GM12878 (cell line): ENCODE measurements at regions of chr6 and their contacts with region 1.

Region 1: DNA sequence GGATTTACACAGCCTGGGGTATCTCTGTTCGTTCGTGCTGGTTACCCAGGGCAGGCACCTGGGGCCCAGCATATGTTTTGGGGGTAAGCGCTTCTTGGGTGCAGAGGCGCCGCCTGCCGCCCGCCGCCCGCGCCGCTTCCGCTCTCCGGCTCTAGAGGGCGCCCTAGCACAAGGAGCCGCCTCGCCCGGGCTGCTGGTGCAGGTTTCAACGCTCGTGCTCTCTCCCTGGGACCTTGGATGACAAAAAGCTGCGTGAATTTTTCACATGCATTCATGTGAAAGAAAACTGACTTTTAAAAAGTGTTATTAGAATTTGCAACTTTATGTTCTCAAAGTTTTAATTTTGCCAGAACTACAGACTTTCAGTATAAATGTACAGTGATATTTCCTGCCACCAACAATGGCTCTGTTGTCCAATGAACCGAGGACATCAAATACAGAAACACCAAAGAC is 32.5 kb downstream of the PRR18 start:
- DNase-seq: no peak
- ATAC-seq: peak; percentile 93
- H3K4me3 ChIP-seq: no peak overlapping the region
- H3K27ac ChIP-seq: no peak overlapping the region
- H3K4me1 ChIP-seq: peaks cover 28% of the 10 kb centered on the region
- H3K27me3 ChIP-seq: no peaks in the 10 kb centered on the region; a peak in 1 of 4 replicates
- CTCF ChIP-seq: peak; percentile 99 to 100 (median 100); a peak in 5 of 6 replicates
- EP300 ChIP-seq: no peak
- POLR2A ChIP-seq: no peak
- RAD21 ChIP-seq: peak; percentile 99

Region 2: DNA sequence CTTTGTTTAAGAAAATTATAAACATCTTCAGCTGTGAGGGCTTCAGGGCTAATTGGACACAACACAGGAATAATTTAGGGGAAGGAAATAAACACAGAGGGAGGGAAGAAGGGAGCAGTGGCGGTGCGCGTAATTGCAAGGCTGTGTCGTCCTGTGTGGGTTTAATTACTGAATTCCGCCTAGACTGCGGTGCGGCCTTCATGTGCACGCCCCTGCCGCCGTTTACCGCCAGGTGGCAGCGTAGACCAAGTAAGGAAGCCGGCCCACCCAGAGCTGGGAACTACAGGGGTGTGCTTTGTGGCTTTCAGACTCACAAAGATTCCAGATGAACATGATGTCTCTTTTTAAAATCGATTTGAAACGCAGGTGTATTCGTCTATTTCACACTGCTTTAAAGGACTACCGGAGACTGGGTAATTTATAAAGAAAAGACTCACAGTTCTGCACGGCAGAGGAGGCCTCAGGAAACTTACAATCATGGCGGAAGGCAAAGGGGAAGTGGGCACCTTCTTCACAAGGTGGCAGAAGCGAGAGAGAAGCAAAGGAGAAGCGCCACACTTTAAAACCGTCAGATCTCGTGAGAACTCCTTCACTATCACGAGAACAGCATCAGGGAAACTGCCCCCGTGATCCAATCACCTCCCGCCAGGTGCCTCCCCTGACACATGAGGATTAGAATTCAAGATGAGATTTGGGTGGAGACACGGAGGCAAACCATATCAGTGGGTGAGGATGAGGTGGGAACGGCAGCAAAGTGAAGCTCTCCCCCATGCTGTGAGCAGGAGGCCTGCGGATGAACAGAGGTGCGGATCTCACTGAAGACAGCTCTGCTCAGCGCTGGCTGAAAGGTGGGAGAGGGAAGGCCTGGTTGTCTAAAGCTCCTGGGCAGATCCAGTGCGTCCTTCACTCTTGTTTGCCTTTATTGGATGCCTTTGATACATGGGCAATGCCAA is 390.7 kb before region 1 on chr6:
- CTCF ChIA-PET with region 1: no interaction called
- POLR2A ChIA-PET with region 1: no interaction called
- RAD21 ChIA-PET with region 1: no interaction called
- SMC1A ChIA-PET with region 1: no interaction called
- in situ Hi-C with region 1: no loop called
- intact Hi-C with region 1: loop called (anchors 10 kb)
- DNase-seq: peak; percentile 5
- ATAC-seq: peak; percentile 100
- H3K4me3 ChIP-seq: no peak overlapping the region
- H3K27ac ChIP-seq: no peak overlapping the region
- H3K4me1 ChIP-seq: no peaks in the 10 kb centered on the region
- H3K27me3 ChIP-seq: no peaks in the 10 kb centered on the region
- CTCF ChIP-seq: peak; percentile 88
- EP300 ChIP-seq: no peak
- POLR2A ChIP-seq: no peak
- RAD21 ChIP-seq: peak; percentile 83

Region 3: DNA sequence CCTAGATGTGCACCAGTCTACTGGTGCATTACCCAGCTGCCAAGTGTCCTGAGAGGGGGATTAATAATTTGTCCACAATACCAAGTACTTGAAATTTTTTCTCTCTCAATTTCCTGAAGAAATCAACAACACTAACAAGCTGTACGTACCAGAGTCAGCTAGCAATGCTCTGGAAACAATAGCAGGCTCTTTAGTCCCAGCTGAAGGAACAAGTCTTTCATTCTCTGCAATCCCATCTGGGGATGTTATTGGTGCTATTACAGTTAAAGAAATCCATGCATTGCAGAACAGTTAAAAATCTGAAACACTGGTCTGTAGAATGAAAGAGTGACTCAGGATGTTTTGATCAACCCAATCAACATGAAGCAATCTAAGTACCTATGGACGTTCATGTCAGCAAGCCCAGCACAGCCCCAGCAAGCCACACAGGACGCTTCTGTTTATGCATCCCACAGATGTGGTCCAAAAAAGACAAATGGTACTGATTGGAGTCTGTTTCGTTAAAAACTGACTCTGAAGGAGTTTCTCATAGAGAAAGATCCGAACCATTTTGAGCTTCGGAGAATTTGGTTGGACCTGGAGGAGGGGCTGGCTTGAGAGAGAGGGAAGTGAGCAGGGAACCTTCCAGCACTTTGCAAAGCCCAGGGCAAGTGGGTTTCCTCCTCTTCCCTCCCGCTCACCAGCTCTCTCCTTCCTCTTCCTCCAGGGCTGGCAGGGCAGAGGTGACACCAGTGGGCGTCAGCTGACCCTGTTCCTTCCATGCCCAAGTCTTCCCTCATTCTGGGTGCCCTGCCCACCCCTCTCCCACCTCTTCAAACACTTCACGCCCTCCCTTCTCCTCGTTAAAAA is 20.5 kb after region 1 on chr6:
- CTCF ChIA-PET with region 1: interaction called, 3 read pairs
- POLR2A ChIA-PET with region 1: no interaction called
- RAD21 ChIA-PET with region 1: no interaction called
- SMC1A ChIA-PET with region 1: interaction called, 10 read pairs
- in situ Hi-C with region 1: no loop called
- intact Hi-C with region 1: no loop called
- DNase-seq: no peak
- ATAC-seq: no peak
- H3K4me3 ChIP-seq: no peak overlapping the region
- H3K27ac ChIP-seq: no peak overlapping the region
- H3K4me1 ChIP-seq: no peaks in the 10 kb centered on the region
- H3K27me3 ChIP-seq: no peaks in the 10 kb centered on the region
- CTCF ChIP-seq: no peak
- EP300 ChIP-seq: no peak
- POLR2A ChIP-seq: no peak
- RAD21 ChIP-seq: no peak

Region 4: GRCh38 chr6:166325383-166326042 is 49.8 kb after region 1 on chr6:
- CTCF ChIA-PET with region 1: interaction called, 11 read pairs
- POLR2A ChIA-PET with region 1: interaction called, 3 read pairs
- RAD21 ChIA-PET with region 1: interaction called, 7 read pairs
- SMC1A ChIA-PET with region 1: interaction called, 11 read pairs
- in situ Hi-C with region 1: no loop called
- intact Hi-C with region 1: no loop called
- DNase-seq: peak; percentile 43
- ATAC-seq: peak; percentile 96
- H3K4me3 ChIP-seq: no peak overlapping the region
- H3K27ac ChIP-seq: peak overlapping the region; percentile 4; the same call in 1 of the 2 replicates
- H3K4me1 ChIP-seq: peaks cover 11% of the 10 kb centered on the region
- H3K27me3 ChIP-seq: no peaks in the 10 kb centered on the region
- CTCF ChIP-seq: no peak; a peak in 1 of 6 replicates
- EP300 ChIP-seq: peak; percentile 60 to 84; a peak in 3 of 4 replicates
- POLR2A ChIP-seq: no peak
- RAD21 ChIP-seq: no peak

Region 5: GRCh38 chr6:166342349-166343149 is 66.8 kb after region 1 on chr6 and contains the start of gene SFT2D1:
- CTCF ChIA-PET with region 1: no interaction called
- POLR2A ChIA-PET with region 1: interaction called, 9 read pairs
- RAD21 ChIA-PET with region 1: no interaction called
- SMC1A ChIA-PET with region 1: interaction called, 4 read pairs
- in situ Hi-C with region 1: no loop called
- intact Hi-C with region 1: loop called (anchors 2 kb)
- DNase-seq: peak; percentile 66
- ATAC-seq: peak; percentile 84
- H3K4me3 ChIP-seq: peak within 1 kb of the TSS; percentile 96
- H3K27ac ChIP-seq: peak within 1 kb of the TSS; percentile 99
- H3K4me1 ChIP-seq: peaks cover 3% of the 10 kb centered on the region; the same call in 1 of the 2 replicates
- H3K27me3 ChIP-seq: no peaks in the 10 kb centered on the region
- CTCF ChIP-seq: no peak
- EP300 ChIP-seq: peak; percentile 64 to 68; a peak in 2 of 4 replicates
- POLR2A ChIP-seq: peak; percentile 99
- RAD21 ChIP-seq: no peak
- polyA plus RNA-seq, gene SFT2D1: 119 to 149 TPM